Esophagus muscularis mucosa (tissue), 4 donors: ENCODE measurements at regions of chr1 and their contacts with region 1.

Region 1: DNA sequence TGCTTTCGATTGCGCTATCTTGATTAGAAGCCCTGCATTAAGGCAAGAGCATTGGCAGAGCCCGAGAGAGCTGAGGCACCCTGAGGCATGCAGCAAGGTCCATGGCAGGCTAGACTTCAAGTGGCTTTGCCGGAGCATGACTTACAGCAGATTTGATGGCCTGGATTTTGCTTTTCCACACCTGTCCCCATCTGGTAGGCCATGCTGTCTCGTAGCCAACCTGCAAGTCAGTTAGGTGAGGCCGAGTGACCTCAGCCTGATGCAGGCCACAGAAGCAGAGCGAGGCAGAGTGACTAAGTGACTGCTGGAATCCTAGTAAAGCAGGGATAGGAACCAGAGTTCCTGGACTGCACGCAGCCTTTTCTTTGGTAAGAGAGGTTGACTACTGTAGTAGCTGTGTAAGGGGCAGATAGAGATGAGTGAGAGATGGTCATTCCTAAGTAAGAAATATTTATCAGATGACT is 148.9 kb downstream of the PBX1 start:
- DNase-seq: no peak
- H3K4me3 ChIP-seq: no peak overlapping the region
- H3K27ac ChIP-seq: peak overlapping the region; percentile 76 to 83 (median 80)
- H3K4me1 ChIP-seq: peaks cover 60 to 97% (median 93%) of the 10 kb centered on the region in 4 donors
- H3K27me3 ChIP-seq: no peaks in the 10 kb centered on the region
- CTCF ChIP-seq: no peak
- EP300 ChIP-seq: no peak
- POLR2A ChIP-seq: no peak

Region 2: GRCh38 chr1:164644774-164645235 is 63.1 kb before region 1 on chr1:
- intact Hi-C with region 1: loop called (anchors 5 kb)
- DNase-seq: no peak
- H3K4me3 ChIP-seq: no peak overlapping the region
- H3K27ac ChIP-seq: peak overlapping the region; percentile 58 to 81 (median 76)
- H3K4me1 ChIP-seq: peaks cover 56 to 98% (median 96%) of the 10 kb centered on the region in 4 donors
- H3K27me3 ChIP-seq: no peaks in the 10 kb centered on the region
- CTCF ChIP-seq: no peak
- EP300 ChIP-seq: no peak
- POLR2A ChIP-seq: no peak

Region 3: DNA sequence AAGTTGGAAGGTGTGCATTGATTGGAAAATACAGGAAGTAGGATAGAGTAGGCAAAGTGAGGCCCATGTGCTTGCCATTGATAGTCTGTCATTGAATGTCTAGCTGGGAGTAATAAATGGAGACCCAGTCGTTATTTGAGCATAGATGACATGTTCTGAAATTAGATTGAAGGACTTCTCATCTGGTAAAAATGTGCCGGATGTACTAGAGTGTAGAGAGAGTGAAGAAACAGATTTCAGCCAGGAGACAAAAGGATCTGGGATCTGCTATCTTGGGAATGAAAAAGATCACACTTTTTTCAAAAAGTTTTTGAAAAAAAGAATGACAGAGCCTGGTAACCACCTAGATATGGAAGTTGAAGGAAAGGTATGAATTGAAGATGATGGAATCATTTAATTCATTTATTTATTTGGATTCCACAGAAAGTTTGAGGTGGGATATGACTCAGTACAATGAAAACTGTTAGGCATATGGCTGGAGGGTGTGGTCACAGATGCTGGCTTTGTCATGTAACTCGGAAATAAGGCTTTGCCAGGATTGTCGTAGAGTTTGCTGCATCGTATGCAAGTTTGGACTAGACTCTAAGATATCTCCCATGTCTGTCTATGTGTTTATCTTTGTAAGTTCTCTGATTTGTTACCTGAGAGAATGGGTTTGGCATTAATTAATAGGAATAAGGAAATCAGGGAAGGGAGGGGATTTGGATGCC is 11.8 kb before region 1 on chr1:
- intact Hi-C with region 1: no loop called
- DNase-seq: no peak
- H3K4me3 ChIP-seq: no peak overlapping the region
- H3K27ac ChIP-seq: peak overlapping the region in 1 of 4 donors; percentile 23
- H3K4me1 ChIP-seq: peaks cover 5 to 64% (median 58%) of the 10 kb centered on the region in 4 donors
- H3K27me3 ChIP-seq: no peaks in the 10 kb centered on the region
- CTCF ChIP-seq: no peak
- EP300 ChIP-seq: no peak
- POLR2A ChIP-seq: no peak

Region 4: DNA sequence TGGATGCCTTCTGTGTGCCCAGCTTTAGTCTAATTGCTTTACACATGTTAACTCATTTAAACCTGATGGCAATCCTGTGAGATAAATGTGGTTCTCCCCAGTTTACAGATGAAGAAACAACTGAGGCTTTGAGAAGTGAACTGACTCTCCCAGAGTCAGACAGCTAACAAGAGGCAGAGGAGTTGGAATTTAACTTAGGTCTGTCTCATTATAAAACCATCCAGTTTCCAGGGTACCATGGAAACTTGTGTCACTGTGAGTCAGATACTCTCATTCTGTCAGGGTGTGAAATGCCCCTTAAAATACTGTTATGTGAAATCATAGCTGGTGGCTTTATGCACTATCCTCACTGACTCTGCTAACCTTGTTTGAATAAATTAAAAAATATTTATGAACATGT is 57.7 kb after region 1 on chr1:
- intact Hi-C with region 1: loop called (anchors 5 kb)
- DNase-seq: no peak
- H3K4me3 ChIP-seq: no peak overlapping the region
- H3K27ac ChIP-seq: peak overlapping the region; percentile 61 to 77 (median 76)
- H3K4me1 ChIP-seq: peaks cover 58 to 74% (median 67%) of the 10 kb centered on the region in 4 donors
- H3K27me3 ChIP-seq: no peaks in the 10 kb centered on the region
- CTCF ChIP-seq: no peak
- EP300 ChIP-seq: no peak
- POLR2A ChIP-seq: no peak